ENCODE measurements at regions of chr13 and their contacts with region 1.

Region 1: GRCh38 chr13:50801087-50801931 is 42.2 kb downstream of the DLEU7 start:
- DNase-seq: peak; percentile 90
- H3K4me3 ChIP-seq: no peak overlapping the region
- H3K27ac ChIP-seq: peak overlapping the region; percentile 2
- H3K4me1 ChIP-seq: peaks cover 35% of the 10 kb centered on the region
- CTCF ChIP-seq: peak; percentile 93

Region 2: DNA sequence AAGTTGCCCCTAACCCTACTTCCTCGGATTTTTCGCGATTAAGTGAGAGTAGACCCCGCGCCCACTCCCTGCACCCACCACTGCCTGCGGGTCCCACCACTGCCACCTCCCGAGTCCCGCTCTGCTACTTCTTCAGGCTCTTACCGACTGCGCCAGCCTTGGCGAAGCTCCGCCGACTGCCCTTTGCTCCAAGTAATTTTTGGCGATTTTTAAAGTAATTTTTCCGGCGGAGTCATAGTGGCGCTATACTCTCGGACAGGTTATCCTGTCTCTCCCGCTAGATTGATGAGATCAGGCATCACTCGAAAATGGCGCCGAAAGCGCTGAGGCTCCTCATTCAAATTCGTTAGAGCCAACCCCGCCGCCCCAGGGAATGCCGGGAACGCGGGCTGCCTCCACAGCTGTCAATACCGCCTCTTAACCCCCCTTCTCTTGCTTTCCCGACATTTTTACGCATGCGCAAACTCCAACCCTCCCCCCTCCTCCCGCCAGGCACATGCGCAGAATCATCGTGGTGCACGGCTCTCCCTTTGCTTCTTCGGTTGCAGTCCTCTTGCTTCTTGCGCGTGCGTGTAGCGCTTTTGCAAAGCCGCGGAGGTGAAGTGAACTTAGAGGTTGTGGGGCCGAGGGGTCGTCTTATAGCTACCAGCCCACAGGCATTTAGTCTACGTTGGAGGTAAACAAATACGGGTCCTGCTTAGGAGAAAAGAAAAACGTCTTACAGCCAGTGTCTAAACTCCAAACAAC is 719.5 kb before region 1 on chr13:
- CTCF ChIA-PET with region 1: no interaction called
- POLR2A ChIA-PET with region 1: interaction called, 3 read pairs
- intact Hi-C with region 1: loop called (anchors 1 kb)
- DNase-seq: peak; percentile 98
- H3K4me3 ChIP-seq: peak overlapping the region; percentile 96
- H3K27ac ChIP-seq: peak overlapping the region; percentile 89
- H3K4me1 ChIP-seq: peaks cover 42% of the 10 kb centered on the region
- CTCF ChIP-seq: peak; percentile 63

Region 3: DNA sequence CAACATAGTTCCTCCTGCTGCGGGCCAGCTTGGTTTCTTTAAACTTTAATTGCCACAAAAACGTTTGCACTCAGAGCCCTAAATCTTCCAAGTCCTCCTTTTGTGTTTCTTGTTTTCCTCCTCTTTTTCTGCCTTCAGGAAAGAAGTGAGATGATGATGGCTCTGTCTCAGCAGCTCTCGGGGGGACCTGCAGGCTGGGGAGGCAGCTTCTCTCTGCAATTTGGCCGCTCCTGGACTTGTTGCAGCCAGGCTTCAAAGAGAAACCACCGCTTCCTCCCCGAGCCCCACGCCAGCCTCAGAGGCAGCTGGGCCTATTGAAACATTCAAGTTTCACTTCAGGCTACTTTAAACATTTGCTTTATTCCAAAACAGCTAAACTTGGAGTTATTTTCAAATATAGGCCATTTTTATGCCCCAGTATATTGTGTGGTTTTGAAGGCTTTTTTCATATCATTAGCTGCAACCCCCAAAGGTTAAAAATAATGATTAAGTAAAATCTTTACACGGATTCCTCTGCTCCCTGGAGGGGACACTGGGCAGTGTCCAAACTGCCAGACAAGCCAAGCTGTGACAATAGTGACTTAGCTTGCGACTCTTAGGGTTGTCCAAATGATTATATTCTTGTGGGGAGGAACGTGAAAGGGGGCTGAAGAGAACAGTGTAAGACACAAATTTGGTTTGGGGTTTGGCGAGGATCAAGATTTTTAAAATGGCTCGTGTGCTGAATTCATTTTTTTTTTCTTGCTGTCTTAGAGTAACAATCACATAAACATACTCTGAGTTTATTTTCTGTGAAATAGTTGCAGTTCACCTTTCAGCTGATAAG is 288.6 kb before region 1 on chr13:
- CTCF ChIA-PET with region 1: no interaction called
- POLR2A ChIA-PET with region 1: interaction called, 3 read pairs
- intact Hi-C with region 1: loop called (anchors 5 kb)
- DNase-seq: peak; percentile 95
- H3K4me3 ChIP-seq: peak overlapping the region; percentile 65
- H3K27ac ChIP-seq: peak overlapping the region; percentile 98
- H3K4me1 ChIP-seq: peaks cover 78% of the 10 kb centered on the region
- CTCF ChIP-seq: peak; percentile 68

Region 4: GRCh38 chr13:50760751-50761150 is 40.6 kb before region 1 on chr13:
- CTCF ChIA-PET with region 1: interaction called, 4 read pairs
- POLR2A ChIA-PET with region 1: interaction called, 4 read pairs
- intact Hi-C with region 1: loop called (anchors 2 kb)
- DNase-seq: no peak
- H3K4me3 ChIP-seq: no peak overlapping the region
- H3K27ac ChIP-seq: no peak overlapping the region
- H3K4me1 ChIP-seq: peaks cover 45% of the 10 kb centered on the region
- CTCF ChIP-seq: no peak